H1 (cell line): ENCODE measurements at regions of chr18 and their contacts with region 1.

Region 1: DNA sequence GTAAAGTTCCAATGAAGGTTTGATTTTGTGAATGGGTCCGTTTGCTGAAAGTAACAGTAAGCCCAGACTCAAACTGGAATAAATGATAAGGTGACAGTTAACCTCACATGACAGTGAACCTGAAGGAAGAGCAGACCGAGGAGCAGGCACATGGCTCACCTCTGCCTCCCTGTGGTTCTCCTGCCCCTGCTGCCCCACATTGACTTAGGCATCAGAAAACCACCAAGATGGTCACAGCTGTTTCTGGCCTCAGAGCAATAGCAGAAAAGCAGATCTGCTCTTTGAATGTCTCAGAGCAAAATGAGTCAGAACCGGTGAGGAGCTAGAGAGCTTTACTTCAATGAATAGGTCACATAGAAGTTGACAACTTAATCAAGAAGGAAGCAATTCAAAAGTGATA is 487.6 kb downstream of the METTL4 start:
- DNase-seq: no peak
- H3K4me3 ChIP-seq: no peak overlapping the region
- H3K27ac ChIP-seq: no peak overlapping the region
- H3K4me1 ChIP-seq: no peaks in the 10 kb centered on the region
- H3K27me3 ChIP-seq: no peaks in the 10 kb centered on the region
- CTCF ChIP-seq: peak; percentile 80 to 89 (median 82)
- EP300 ChIP-seq: no peak
- POLR2A ChIP-seq: no peak
- RAD21 ChIP-seq: peak; percentile 88 to 90

Region 2: GRCh38 chr18:1914490-1914889 is 169.2 kb before region 1 on chr18:
- CTCF ChIA-PET with region 1: interaction called, 12 read pairs
- POLR2A ChIA-PET with region 1: no interaction called
- DNase-seq: no peak
- H3K4me3 ChIP-seq: no peak overlapping the region
- H3K27ac ChIP-seq: no peak overlapping the region
- H3K4me1 ChIP-seq: no peaks in the 10 kb centered on the region
- H3K27me3 ChIP-seq: no peaks in the 10 kb centered on the region
- CTCF ChIP-seq: peak in 2 of 3 experiments; percentile 63 to 71; a peak in 3 of 4 replicates
- EP300 ChIP-seq: no peak
- POLR2A ChIP-seq: no peak
- RAD21 ChIP-seq: peak; percentile 74 to 79

Region 3: DNA sequence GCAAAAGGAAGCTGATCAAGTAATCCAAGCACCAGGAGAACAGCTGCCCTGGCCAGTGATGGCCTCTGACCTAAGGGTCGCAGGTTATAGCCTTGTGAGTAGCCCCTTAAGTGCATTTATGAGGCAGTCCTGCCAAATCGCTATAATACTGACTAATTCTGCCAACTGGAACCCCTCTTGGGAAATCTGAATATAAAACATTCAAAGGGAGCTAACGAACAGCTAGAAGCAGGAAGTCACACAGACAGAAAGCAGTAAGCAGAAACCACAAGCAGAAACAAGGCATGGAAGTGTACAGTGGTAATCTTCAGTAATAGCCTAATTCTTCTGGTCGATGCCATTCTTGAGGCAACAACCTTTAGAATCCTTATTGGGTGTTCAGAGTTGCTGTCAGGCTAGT is 33.7 kb before region 1 on chr18:
- CTCF ChIA-PET with region 1: interaction called, 10 read pairs
- POLR2A ChIA-PET with region 1: no interaction called
- DNase-seq: no peak
- H3K4me3 ChIP-seq: no peak overlapping the region
- H3K27ac ChIP-seq: no peak overlapping the region
- H3K4me1 ChIP-seq: no peaks in the 10 kb centered on the region
- H3K27me3 ChIP-seq: no peaks in the 10 kb centered on the region
- CTCF ChIP-seq: no peak
- EP300 ChIP-seq: no peak
- POLR2A ChIP-seq: no peak
- RAD21 ChIP-seq: no peak